ENCODE measurements at regions of chr13 and their contacts with region 1.

Region 1: GRCh38 chr13:41132512-41133152 is at the start of gene KBTBD6:
- DNase-seq: peak; percentile 98
- total RNA-seq, gene KBTBD6: 5.1 TPM

Region 2: GRCh38 chr13:40221460-40222201 is 911.0 kb before region 1 on chr13:
- intact Hi-C with region 1: no loop called
- DNase-seq: no peak

Region 3: DNA sequence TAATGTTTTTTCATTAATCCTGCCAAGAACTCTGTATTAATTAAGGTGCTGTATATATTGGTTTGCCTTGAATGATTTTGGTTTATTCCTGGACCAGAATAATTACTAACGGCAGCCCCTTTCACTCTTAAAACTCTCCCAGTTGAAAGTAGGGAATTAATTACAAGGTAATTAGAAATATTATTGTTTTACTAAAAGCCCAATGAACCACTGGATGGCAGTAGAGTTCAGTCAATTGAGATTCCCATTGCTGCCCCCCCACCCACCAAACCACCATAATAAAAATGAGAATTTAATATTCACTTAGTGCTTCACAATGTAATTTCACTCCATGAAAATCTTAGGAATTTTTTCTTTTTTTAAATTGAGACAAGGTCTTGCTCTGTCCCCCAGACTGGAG is 57.6 kb before region 1 on chr13:
- intact Hi-C with region 1: loop called (anchors 5 kb)
- DNase-seq: no peak

Region 4: GRCh38 chr13:41193919-41194824 is 61.5 kb after region 1 on chr13 and contains the start of gene KBTBD7:
- intact Hi-C with region 1: loop called (anchors 1 kb)
- DNase-seq: peak; percentile 98
- total RNA-seq, gene KBTBD7: 5.0 TPM

Region 5: GRCh38 chr13:41263261-41264027 is 130.8 kb after region 1 on chr13 and contains the start of gene MTRF1:
- intact Hi-C with region 1: loop called (anchors 5 kb)
- DNase-seq: peak; percentile 93
- total RNA-seq, gene MTRF1: 8.5 TPM